CD8-positive, alpha-beta T cell (primary cell): ENCODE measurements at regions of chr2 and their contacts with region 1.

Region 1: GRCh38 chr2:181457121-181457740 is at the start of gene ITGA4:
- DNase-seq: peak; percentile 78 to 94 (median 86)
- ATAC-seq: peak; percentile 77
- H3K4me3 ChIP-seq: peak within 1 kb of the TSS; percentile 88
- H3K4me3 Mint-ChIP-seq: peak within 1 kb of the TSS; percentile 89
- H3K27ac ChIP-seq: peak within 1 kb of the TSS; percentile 85 to 91
- H3K27ac Mint-ChIP-seq: peak within 1 kb of the TSS; percentile 94
- H3K4me1 ChIP-seq: peaks cover 24% of the 10 kb centered on the region
- H3K4me1 Mint-ChIP-seq: peaks cover 53% of the 10 kb centered on the region
- H3K27me3 ChIP-seq: no peaks in the 10 kb centered on the region
- H3K27me3 Mint-ChIP-seq: no peaks in the 10 kb centered on the region
- CTCF ChIP-seq: peak; percentile 78
- total RNA-seq, gene ITGA4: 102 TPM

Region 2: GRCh38 chr2:180980106-180980942 is 476.9 kb before region 1 on chr2 and contains the start of gene UBE2E3:
- CTCF ChIA-PET with region 1: no interaction called
- POLR2A ChIA-PET with region 1: no interaction called
- intact Hi-C with region 1: loop called (anchors 5 kb)
- DNase-seq: peak; percentile 62 to 89 (median 77)
- ATAC-seq: peak; percentile 77
- H3K4me3 ChIP-seq: peak within 1 kb of the TSS; percentile 71 to 85
- H3K4me3 Mint-ChIP-seq: peak within 1 kb of the TSS; percentile 92
- H3K27ac ChIP-seq: peak within 1 kb of the TSS; percentile 55 to 62
- H3K27ac Mint-ChIP-seq: peak within 1 kb of the TSS; percentile 93
- H3K4me1 ChIP-seq: peaks cover 28% of the 10 kb centered on the region
- H3K4me1 Mint-ChIP-seq: peaks cover 45% of the 10 kb centered on the region
- H3K27me3 ChIP-seq: no peaks in the 10 kb centered on the region
- H3K27me3 Mint-ChIP-seq: no peaks in the 10 kb centered on the region
- CTCF ChIP-seq: no peak
- total RNA-seq, gene UBE2E3: 20.0 to 20.1 TPM

Region 3: DNA sequence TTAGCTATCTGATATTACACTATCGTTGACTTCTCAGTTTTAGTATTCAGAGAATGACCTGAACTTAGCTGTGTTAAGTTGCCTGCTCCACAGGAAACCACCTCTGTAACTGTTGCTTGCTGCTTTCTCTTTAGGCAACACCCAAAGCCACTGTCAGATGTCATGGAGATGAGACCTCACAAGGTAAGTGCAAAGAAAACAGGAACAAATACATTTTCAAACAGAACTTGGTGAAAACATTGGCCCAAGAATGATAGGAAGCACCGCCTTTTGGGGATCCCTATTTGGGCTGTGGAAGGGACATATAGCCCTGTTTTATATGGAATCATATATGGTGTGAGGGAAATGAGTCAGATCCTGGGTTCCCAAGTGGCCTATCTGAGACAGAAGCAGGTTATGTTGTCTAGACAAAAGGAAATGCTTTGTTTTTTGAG is 333.4 kb before region 1 on chr2:
- CTCF ChIA-PET with region 1: interaction called, 9 read pairs
- POLR2A ChIA-PET with region 1: interaction called, 37 read pairs
- intact Hi-C with region 1: loop called (anchors 1 to 5 kb)
- DNase-seq: peak; percentile 25 to 94 (median 60)
- ATAC-seq: peak; percentile 93
- H3K4me3 ChIP-seq: peak overlapping the region; percentile 31 to 42
- H3K4me3 Mint-ChIP-seq: peak overlapping the region; percentile 81
- H3K27ac ChIP-seq: peak overlapping the region; percentile 84 to 96
- H3K27ac Mint-ChIP-seq: peak overlapping the region; percentile 99
- H3K4me1 ChIP-seq: peaks cover 66% of the 10 kb centered on the region
- H3K4me1 Mint-ChIP-seq: peaks cover 74% of the 10 kb centered on the region
- H3K27me3 ChIP-seq: no peaks in the 10 kb centered on the region
- H3K27me3 Mint-ChIP-seq: no peaks in the 10 kb centered on the region
- CTCF ChIP-seq: no peak

Region 4: GRCh38 chr2:181235683-181236459 is 221.4 kb before region 1 on chr2:
- CTCF ChIA-PET with region 1: no interaction called
- POLR2A ChIA-PET with region 1: no interaction called
- intact Hi-C with region 1: loop called in 1 of 2 experiments (anchors 5 kb)
- DNase-seq: no peak
- ATAC-seq: no peak
- H3K4me3 ChIP-seq: no peak overlapping the region
- H3K4me3 Mint-ChIP-seq: no peak overlapping the region
- H3K27ac ChIP-seq: no peak overlapping the region
- H3K27ac Mint-ChIP-seq: no peak overlapping the region
- H3K4me1 ChIP-seq: peaks cover 1% of the 10 kb centered on the region
- H3K4me1 Mint-ChIP-seq: peaks cover 36% of the 10 kb centered on the region
- H3K27me3 ChIP-seq: no peaks in the 10 kb centered on the region
- H3K27me3 Mint-ChIP-seq: no peaks in the 10 kb centered on the region
- CTCF ChIP-seq: no peak

Region 5: DNA sequence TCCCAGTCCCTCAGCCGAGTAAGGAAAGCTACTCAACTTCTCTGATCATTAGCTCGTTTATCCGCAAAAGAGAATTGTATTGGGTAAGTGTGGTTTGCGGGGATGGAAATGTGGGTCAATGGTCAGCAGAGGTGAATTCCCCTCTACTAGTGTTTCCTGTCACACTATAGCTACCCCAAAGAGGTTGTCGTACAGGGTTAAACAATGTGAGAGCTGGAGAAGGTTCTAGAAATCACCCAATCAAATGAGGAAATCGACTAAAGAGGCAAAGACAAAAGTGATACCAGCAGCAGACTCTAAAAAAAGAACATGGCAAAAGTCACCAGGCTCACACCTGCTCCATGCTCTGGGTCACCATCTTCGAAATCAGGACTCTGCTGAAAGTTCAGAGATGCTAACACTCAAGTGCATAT is 144.7 kb before region 1 on chr2:
- CTCF ChIA-PET with region 1: interaction called, 11 read pairs
- POLR2A ChIA-PET with region 1: interaction called, 14 read pairs
- intact Hi-C with region 1: loop called in 1 of 2 experiments (anchors 2 kb)
- DNase-seq: peak in 5 of 9 experiments; percentile 18 to 74 (median 20)
- ATAC-seq: peak; percentile 51
- H3K4me3 ChIP-seq: no peak overlapping the region
- H3K4me3 Mint-ChIP-seq: peak overlapping the region; percentile 77
- H3K27ac ChIP-seq: peak overlapping the region; percentile 28 to 79
- H3K27ac Mint-ChIP-seq: peak overlapping the region; percentile 96
- H3K4me1 ChIP-seq: peaks cover 70% of the 10 kb centered on the region
- H3K4me1 Mint-ChIP-seq: peaks cover 59% of the 10 kb centered on the region
- H3K27me3 ChIP-seq: no peaks in the 10 kb centered on the region
- H3K27me3 Mint-ChIP-seq: no peaks in the 10 kb centered on the region
- CTCF ChIP-seq: no peak

Region 6: DNA sequence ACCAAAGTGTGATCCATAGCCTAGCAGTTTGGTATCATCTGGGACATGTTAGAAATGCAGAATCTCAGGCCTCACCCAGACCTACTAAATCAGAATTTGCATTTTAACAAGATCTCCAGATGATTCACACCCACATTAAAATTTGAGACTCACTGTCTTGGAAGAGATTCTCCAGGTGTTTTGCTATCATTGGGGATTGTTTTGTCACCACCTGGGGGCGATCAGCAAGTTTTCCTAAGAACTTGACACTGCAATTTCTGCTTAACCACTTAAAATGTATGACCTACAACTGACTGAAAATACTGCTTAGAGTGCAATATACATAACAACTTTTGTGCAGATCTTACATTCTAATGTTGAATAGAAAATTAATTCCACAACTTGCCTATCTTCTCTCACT is 19.0 kb before region 1 on chr2:
- CTCF ChIA-PET with region 1: interaction called, 20 read pairs
- POLR2A ChIA-PET with region 1: interaction called, 4 read pairs
- intact Hi-C with region 1: loop called in 1 of 2 experiments (anchors 1 kb)
- DNase-seq: peak in 6 of 9 experiments; percentile 28 to 65 (median 40)
- ATAC-seq: no peak
- H3K4me3 ChIP-seq: no peak overlapping the region
- H3K4me3 Mint-ChIP-seq: no peak overlapping the region
- H3K27ac ChIP-seq: no peak overlapping the region
- H3K27ac Mint-ChIP-seq: no peak overlapping the region
- H3K4me1 ChIP-seq: no peaks in the 10 kb centered on the region
- H3K4me1 Mint-ChIP-seq: peaks cover 25% of the 10 kb centered on the region
- H3K27me3 ChIP-seq: no peaks in the 10 kb centered on the region
- H3K27me3 Mint-ChIP-seq: no peaks in the 10 kb centered on the region
- CTCF ChIP-seq: no peak

Region 7: GRCh38 chr2:181790716-181791649 is 333.8 kb after region 1 on chr2:
- CTCF ChIA-PET with region 1: no interaction called
- POLR2A ChIA-PET with region 1: no interaction called
- intact Hi-C with region 1: no loop called
- DNase-seq: peak in 6 of 9 experiments; percentile 5 to 41 (median 16)
- ATAC-seq: peak; percentile 63
- H3K4me3 ChIP-seq: no peak overlapping the region
- H3K4me3 Mint-ChIP-seq: no peak overlapping the region
- H3K27ac ChIP-seq: no peak overlapping the region
- H3K27ac Mint-ChIP-seq: peak overlapping the region; percentile 46
- H3K4me1 ChIP-seq: no peaks in the 10 kb centered on the region
- H3K4me1 Mint-ChIP-seq: peaks cover 10% of the 10 kb centered on the region
- H3K27me3 ChIP-seq: no peaks in the 10 kb centered on the region
- H3K27me3 Mint-ChIP-seq: no peaks in the 10 kb centered on the region
- CTCF ChIP-seq: no peak

Region 8: DNA sequence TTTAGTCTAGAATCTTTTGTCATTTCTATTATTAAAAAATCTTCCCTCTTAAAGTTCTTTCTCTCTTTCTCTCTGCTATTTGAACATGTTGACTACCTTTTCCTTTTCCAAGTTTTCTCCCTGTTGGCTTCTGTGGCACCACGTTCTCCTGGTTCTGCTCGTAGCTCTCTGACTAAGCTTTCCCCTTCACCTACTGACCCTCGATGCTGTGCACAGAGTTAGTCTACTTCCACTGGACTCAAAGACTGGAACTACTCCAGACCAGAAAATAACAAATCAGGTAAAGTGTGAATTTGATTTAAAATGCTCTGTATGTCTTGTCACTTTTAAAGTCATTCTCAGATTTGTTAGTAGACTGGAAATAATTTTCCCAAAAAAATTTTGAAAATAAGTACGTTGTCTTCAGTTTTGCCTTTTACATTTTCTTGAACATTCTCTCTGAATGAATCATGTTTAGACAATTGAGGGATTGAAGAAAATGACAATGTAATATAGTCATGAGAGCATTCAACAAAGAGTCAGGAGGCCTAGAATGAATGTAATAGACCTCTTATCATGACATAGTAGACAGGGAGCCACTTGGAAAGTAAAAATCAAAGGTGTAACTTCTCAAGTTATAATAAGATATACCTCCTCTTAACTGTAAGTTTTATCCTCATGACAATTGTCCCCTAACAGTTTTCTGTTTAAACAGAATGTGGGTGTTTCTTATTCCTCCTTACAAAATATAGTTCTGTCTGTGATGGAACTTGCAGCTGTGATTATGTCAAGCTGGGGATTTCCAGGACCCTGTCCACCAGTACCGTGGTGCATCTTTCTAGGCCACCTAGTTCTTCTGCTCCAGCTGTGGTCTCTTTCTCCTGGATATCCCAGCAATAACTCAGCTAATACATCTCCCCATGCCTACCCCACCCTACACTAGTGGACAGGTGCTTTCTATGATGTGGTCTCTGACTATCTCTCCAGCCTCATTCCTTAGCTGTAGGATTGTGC is 459.8 kb after region 1 on chr2:
- CTCF ChIA-PET with region 1: no interaction called
- POLR2A ChIA-PET with region 1: no interaction called
- intact Hi-C with region 1: no loop called
- DNase-seq: no peak
- ATAC-seq: no peak
- H3K4me3 ChIP-seq: no peak overlapping the region
- H3K4me3 Mint-ChIP-seq: no peak overlapping the region
- H3K27ac ChIP-seq: no peak overlapping the region
- H3K27ac Mint-ChIP-seq: no peak overlapping the region
- H3K4me1 ChIP-seq: no peaks in the 10 kb centered on the region
- H3K4me1 Mint-ChIP-seq: no peaks in the 10 kb centered on the region
- H3K27me3 ChIP-seq: no peaks in the 10 kb centered on the region
- H3K27me3 Mint-ChIP-seq: no peaks in the 10 kb centered on the region
- CTCF ChIP-seq: no peak